Activated CD4-positive, alpha-beta T cell treated with anti-CD3 and anti-CD28 coated beads, Interleukin-2, amount 10 ng/mL, durations not matched to agents 7 days and 5 days (primary cell): ENCODE measurements at regions of chr16 and their contacts with region 1.

Region 1: DNA sequence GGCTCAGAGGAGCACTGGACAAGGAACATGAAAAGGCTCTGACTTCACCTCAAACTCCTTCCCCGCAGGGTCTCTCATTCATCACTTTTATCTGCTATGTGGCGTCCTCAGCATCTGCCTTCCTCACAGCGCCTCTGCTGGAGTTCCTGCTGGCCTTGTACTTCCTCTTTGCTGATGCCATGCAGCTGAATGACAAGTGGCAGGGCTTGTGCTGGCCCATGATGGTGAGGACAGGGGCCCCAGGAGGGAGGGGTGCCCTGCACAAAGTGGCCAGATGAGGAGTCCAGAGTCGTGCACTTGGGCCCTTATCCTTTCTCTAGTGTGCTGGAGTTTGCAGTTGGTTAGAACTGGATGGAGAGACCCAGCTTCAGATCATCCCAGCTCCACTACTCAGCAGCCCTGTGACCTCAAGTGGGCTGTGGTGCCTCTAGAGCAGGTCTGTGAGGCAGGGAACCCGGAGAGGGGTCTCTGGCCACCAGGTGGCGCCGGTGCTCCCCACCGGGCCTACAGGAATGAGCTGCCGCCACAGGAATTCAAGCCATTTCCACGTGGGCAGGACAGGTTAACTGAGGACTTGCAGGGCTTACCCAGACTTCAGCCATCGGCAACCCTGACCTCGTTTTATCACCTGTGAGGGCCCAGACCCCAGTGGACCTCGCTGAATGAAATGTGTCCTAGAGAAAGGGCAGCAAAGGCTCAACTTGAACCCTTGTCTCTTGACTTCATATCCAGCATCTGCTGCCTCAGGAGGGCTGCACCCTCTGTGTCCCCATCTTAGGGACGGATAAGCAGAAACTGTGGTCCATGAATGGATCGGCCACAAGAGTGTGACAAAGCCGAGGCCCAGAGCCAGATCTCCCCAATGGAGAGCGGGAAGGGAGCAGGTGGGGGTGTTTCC is 4.0 kb downstream of the CMTM3 start:
- DNase-seq: peak; percentile 85
- H3K4me3 Mint-ChIP-seq: no peak overlapping the region
- H3K27ac Mint-ChIP-seq: peak overlapping the region; percentile 66
- H3K4me1 Mint-ChIP-seq: peaks cover 35% of the 10 kb centered on the region
- H3K27me3 Mint-ChIP-seq: no peaks in the 10 kb centered on the region

Region 2: GRCh38 chr16:66474750-66475199 is 133.7 kb before region 1 on chr16:
- CTCF ChIA-PET with region 1: interaction called, 11 read pairs
- POLR2A ChIA-PET with region 1: no interaction called
- DNase-seq: peak; percentile 83
- H3K4me3 Mint-ChIP-seq: no peak overlapping the region
- H3K27ac Mint-ChIP-seq: peak overlapping the region; percentile 39
- H3K4me1 Mint-ChIP-seq: peaks cover 51% of the 10 kb centered on the region
- H3K27me3 Mint-ChIP-seq: no peaks in the 10 kb centered on the region

Region 3: DNA sequence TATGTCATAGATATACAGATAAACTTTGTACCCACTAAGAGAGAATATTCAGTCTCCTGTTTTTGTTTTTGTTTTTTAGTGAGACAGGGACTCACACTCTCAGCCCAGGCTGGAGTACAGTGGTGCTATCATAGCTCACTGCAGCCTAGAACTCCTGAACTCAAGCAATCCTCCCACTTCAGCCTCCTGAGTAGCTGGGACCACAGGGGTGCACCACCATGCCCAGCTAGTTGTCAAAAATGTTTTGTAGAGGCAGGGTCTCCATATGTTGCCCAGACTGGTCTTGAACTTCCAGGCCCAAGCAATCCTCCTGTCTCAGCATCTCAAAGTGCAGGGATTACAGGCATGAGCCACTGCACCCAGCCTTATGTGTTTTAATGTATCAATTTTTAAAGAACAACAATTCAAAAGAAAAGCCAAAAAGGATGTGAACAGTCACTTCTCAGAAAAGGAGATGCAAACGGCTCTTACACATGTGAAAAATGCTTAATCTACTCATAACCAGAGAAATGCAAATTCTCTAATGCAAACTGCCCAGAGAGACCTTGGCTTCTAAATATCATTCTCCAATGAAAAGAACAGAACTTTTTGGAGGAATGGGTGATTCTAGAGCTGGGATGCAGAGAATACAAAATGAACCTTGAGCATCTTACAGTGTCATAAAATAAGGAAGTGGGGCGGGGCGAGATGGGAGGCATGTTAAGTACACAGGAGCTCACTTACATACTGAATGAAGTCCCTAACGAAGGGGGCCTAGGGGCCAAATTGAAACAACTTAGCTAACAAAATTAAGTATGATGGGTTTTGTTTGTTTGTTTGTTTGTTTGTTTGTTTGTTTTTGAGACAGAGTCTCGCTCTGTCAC is 11.3 kb before region 1 on chr16:
- CTCF ChIA-PET with region 1: interaction called, 25 read pairs
- POLR2A ChIA-PET with region 1: no interaction called
- DNase-seq: peak; percentile 33
- H3K4me3 Mint-ChIP-seq: peak overlapping the region; percentile 42
- H3K27ac Mint-ChIP-seq: peak overlapping the region; percentile 91
- H3K4me1 Mint-ChIP-seq: peaks cover 48% of the 10 kb centered on the region
- H3K27me3 Mint-ChIP-seq: no peaks in the 10 kb centered on the region

Region 4: GRCh38 chr16:66618588-66619375 is 10.3 kb after region 1 on chr16:
- CTCF ChIA-PET with region 1: interaction called, 12 read pairs
- POLR2A ChIA-PET with region 1: no interaction called
- DNase-seq: no peak
- H3K4me3 Mint-ChIP-seq: no peak overlapping the region
- H3K27ac Mint-ChIP-seq: no peak overlapping the region
- H3K4me1 Mint-ChIP-seq: no peaks in the 10 kb centered on the region
- H3K27me3 Mint-ChIP-seq: no peaks in the 10 kb centered on the region

Region 5: DNA sequence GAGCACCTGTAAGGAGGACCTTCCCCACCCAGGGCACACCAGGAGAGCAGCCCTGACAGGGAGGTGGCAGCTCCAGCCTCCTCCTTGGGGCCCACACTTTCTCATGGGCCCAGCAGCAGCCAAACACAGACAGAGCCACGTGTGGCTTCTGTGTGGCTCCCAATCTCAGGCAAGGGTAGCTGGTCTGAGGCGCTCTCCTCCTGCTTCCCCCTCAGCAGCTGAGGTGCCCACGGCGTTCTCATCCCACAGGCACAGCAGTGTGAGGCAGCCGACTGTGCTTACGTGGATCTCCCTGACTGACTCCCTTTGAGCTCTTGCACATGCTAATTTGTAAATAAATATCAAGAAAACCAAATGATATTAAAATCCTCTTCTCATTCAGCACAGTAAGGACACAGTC is 26.9 kb after region 1 on chr16:
- CTCF ChIA-PET with region 1: no interaction called
- POLR2A ChIA-PET with region 1: no interaction called
- DNase-seq: no peak
- H3K4me3 Mint-ChIP-seq: no peak overlapping the region
- H3K27ac Mint-ChIP-seq: no peak overlapping the region
- H3K4me1 Mint-ChIP-seq: no peaks in the 10 kb centered on the region
- H3K27me3 Mint-ChIP-seq: peaks cover 2% of the 10 kb centered on the region

Region 6: GRCh38 chr16:66650707-66651473 is 42.4 kb after region 1 on chr16:
- CTCF ChIA-PET with region 1: interaction called, 10 read pairs
- POLR2A ChIA-PET with region 1: no interaction called
- DNase-seq: peak; percentile 89
- H3K4me3 Mint-ChIP-seq: no peak overlapping the region
- H3K27ac Mint-ChIP-seq: no peak overlapping the region
- H3K4me1 Mint-ChIP-seq: peaks cover 15% of the 10 kb centered on the region
- H3K27me3 Mint-ChIP-seq: peaks cover 1% of the 10 kb centered on the region

Region 7: DNA sequence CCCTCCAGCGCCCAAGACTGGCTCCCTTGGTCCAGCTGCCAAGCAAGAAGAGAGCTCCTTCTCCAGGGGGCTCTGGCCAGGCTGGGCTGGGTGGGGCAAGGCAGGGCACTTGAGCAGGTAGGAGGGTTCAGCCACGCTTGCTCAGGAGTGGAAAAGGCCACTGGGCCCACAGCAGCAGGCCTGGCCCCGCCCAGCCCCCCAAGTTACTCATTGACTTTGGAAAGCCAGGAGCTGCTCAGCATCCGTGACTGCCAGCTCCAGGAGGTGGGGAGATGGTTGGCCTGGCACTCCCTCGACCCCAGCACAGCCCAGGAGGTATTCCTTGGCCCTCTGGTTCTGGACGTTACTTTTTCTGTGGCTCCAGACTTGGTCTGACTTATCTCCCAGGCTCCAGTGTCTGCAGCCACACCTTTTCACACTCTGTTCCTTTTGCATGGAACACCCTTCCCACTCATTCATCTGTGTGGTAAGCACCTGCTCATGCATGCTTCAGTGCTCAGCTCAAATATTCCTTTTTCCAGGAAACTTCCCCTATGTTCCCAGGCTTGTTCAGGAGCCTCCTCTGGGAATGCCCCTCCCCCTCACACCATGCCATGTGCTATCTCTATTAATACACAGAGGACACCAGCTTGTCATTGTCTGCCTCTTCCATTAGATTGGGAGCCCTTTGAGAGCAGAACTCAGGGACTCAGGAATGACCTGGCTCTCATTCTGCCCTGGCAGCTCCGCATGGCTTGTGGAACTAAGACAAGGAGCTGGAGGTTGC is 310.5 kb after region 1 on chr16 and contains the start of gene CDH16:
- CTCF ChIA-PET with region 1: no interaction called
- POLR2A ChIA-PET with region 1: no interaction called
- DNase-seq: no peak
- H3K4me3 Mint-ChIP-seq: no peak within 1 kb of the TSS
- H3K27ac Mint-ChIP-seq: no peak within 1 kb of the TSS
- H3K4me1 Mint-ChIP-seq: peaks cover 4% of the 10 kb centered on the region
- H3K27me3 Mint-ChIP-seq: peaks cover 24% of the 10 kb centered on the region
- total RNA-seq, gene CDH16: not detected